Activated CD4-positive, alpha-beta T cell treated with anti-CD3 and anti-CD28 coated beads, Interleukin-2, amount 10 ng/mL, durations not matched to agents 7 days and 5 days (primary cell): ENCODE measurements at regions of chr16 and their contacts with region 1.

Region 1: DNA sequence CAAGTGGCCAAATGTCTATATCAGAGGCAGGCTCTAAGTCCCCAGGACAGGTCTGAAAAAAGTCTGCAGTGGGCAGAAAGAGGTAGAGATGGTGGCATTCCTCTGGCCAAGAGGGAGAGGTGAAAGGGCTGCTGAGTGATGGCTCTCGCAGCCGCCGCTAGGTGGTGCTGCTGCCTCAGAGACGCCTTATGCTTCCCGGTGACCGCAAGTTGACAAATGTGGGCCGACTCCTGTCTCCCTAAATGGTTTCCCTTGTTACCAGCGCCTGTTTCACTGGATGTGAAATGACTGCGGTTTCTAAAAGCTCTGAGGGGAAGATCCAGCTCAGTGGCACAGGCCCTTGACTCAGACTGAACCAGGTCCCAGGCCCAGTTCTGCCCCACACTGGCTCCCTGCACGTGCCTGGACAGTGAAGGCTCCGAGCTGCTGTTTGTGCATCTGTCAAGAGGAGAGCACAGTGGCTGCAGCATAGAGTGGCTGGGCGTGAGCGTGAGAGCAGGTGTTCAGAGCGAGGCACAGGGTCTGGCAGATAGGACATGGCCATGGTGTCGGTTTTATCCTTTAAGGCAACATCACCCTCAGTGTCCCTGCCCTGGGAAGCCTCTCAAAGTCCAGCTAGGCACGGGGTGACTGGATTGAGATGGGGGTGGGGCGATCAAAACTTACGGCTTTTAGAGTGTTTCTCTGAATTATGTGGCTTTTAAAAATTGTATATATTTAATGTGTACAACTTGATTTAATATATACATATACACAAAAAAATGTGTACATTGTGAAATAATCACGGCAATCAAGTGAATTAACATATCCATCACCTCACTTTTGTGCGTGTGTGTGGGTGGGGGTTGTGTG is 19.9 kb downstream of the CLEC16A start:
- DNase-seq: peak; percentile 85
- H3K4me3 Mint-ChIP-seq: peak overlapping the region; percentile 55
- H3K27ac Mint-ChIP-seq: peak overlapping the region; percentile 85
- H3K4me1 Mint-ChIP-seq: peaks cover 83% of the 10 kb centered on the region
- H3K27me3 Mint-ChIP-seq: no peaks in the 10 kb centered on the region

Region 2: DNA sequence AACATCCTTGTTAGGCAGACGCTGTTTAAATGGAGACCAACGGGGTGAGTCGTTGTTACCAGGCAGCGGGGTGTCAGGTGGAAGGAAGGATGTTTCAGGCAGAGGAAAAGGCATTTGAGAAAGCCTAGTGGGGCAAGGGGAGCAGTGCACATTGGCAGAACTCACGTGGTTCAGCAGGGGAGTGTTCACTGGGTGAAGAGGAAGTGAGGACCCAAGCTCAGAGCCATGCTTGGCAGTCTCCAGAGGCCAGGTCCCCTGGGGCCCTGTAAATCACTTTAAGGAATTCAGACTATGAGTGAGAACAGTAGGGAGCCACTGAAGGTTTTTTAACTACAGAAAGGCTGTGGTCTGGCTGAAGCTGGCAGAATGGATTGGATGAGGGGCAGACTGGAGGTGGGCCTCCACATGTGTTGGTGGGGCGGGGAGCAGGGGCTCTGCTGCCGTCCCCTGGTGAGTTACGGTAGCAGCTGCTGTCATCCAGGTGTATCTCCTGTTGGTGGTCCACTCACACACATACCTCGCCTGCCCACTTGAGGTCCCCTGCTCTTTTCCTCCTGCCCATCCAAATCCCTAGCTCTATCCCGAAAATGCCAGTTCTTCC is 14.8 kb before region 1 on chr16:
- CTCF ChIA-PET with region 1: interaction called, 43 read pairs
- POLR2A ChIA-PET with region 1: no interaction called
- DNase-seq: peak; percentile 79
- H3K4me3 Mint-ChIP-seq: no peak overlapping the region
- H3K27ac Mint-ChIP-seq: peak overlapping the region; percentile 83
- H3K4me1 Mint-ChIP-seq: peaks cover 68% of the 10 kb centered on the region
- H3K27me3 Mint-ChIP-seq: no peaks in the 10 kb centered on the region

Region 3: GRCh38 chr16:11262915-11263314 is 298.6 kb after region 1 on chr16:
- CTCF ChIA-PET with region 1: interaction called, 72 read pairs
- POLR2A ChIA-PET with region 1: interaction called, 3 read pairs
- DNase-seq: no peak
- H3K4me3 Mint-ChIP-seq: no peak overlapping the region
- H3K27ac Mint-ChIP-seq: peak overlapping the region; percentile 91
- H3K4me1 Mint-ChIP-seq: peaks cover 63% of the 10 kb centered on the region
- H3K27me3 Mint-ChIP-seq: no peaks in the 10 kb centered on the region

Region 4: GRCh38 chr16:11386791-11387546 is 422.7 kb after region 1 on chr16:
- CTCF ChIA-PET with region 1: interaction called, 16 read pairs
- POLR2A ChIA-PET with region 1: no interaction called
- DNase-seq: no peak
- H3K4me3 Mint-ChIP-seq: no peak overlapping the region
- H3K27ac Mint-ChIP-seq: no peak overlapping the region
- H3K4me1 Mint-ChIP-seq: peaks cover 21% of the 10 kb centered on the region
- H3K27me3 Mint-ChIP-seq: no peaks in the 10 kb centered on the region

Region 5: DNA sequence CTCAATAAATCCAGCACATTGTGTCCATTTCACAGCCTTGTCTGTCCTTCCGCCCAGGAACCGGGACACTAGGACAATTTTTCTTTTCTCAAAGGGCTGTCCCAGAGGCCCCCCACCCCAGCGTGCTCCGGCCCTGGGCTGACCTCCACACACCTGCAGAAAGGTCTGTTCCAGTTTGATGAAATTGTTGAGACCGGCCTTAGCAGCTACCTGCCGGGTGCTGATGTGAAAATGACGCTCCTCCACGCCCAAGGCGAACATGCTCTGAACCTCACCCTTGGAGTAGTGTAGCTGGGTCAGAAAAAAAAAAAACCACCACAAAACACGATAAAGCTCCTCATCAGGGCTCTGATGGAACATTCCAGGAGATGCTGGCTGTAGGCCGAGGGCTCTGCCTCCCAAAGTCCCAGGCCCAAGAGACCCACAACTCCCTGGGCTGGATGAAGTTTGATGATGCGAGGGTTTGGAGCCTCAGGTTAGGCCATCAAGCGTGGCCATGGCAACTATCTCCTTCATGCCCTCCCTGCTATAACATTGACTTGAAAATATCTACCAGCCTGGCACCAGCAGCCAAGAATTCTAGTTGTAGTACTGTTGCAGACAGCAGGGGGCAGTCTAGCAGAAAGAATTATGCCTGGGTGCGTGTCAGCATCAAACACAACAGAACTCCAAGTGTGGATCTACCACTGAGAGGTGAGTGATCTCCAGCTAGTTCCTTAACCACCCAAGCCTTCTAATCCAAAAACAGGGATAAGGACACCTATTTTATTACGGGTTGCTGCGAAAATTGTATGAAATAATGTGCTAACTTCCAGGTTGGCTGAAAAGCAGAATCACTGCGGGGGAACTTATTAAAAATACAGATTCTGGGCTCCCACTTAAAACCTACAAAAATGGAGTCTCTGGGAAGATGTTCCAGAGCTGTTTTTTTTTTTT is 443.1 kb after region 1 on chr16:
- CTCF ChIA-PET with region 1: interaction called, 32 read pairs
- POLR2A ChIA-PET with region 1: no interaction called
- DNase-seq: peak; percentile 76
- H3K4me3 Mint-ChIP-seq: no peak overlapping the region
- H3K27ac Mint-ChIP-seq: no peak overlapping the region
- H3K4me1 Mint-ChIP-seq: peaks cover 4% of the 10 kb centered on the region
- H3K27me3 Mint-ChIP-seq: no peaks in the 10 kb centered on the region